CD8-positive, alpha-beta T cell (primary cell): ENCODE measurements at regions of chr5 and their contacts with region 1.

Region 1: GRCh38 chr5:132490486-132491367 is at the start of gene IRF1:
- DNase-seq: peak; percentile 94 to 99 (median 97)
- ATAC-seq: peak; percentile 74
- H3K4me3 ChIP-seq: peak within 1 kb of the TSS; percentile 90 to 96
- H3K4me3 Mint-ChIP-seq: peak within 1 kb of the TSS; percentile 96
- H3K27ac ChIP-seq: peak within 1 kb of the TSS; percentile 95 to 98
- H3K27ac Mint-ChIP-seq: peak within 1 kb of the TSS; percentile 97
- H3K4me1 ChIP-seq: peaks cover 75% of the 10 kb centered on the region
- H3K4me1 Mint-ChIP-seq: peaks cover 75% of the 10 kb centered on the region
- H3K27me3 ChIP-seq: no peaks in the 10 kb centered on the region
- H3K27me3 Mint-ChIP-seq: no peaks in the 10 kb centered on the region
- CTCF ChIP-seq: no peak
- total RNA-seq, gene IRF1: 1,214 to 1,250 TPM

Region 2: GRCh38 chr5:131634996-131635754 is 855.6 kb before region 1 on chr5 and contains the start of gene RAPGEF6:
- CTCF ChIA-PET with region 1: no interaction called
- POLR2A ChIA-PET with region 1: no interaction called
- intact Hi-C with region 1: loop called in 1 of 2 experiments (anchors 10 kb)
- DNase-seq: peak; percentile 91 to 100 (median 95)
- ATAC-seq: peak; percentile 83
- H3K4me3 ChIP-seq: peak within 1 kb of the TSS; percentile 83
- H3K4me3 Mint-ChIP-seq: peak within 1 kb of the TSS; percentile 96
- H3K27ac ChIP-seq: peak within 1 kb of the TSS; percentile 94 to 98
- H3K27ac Mint-ChIP-seq: peak within 1 kb of the TSS; percentile 99
- H3K4me1 ChIP-seq: peaks cover 61% of the 10 kb centered on the region
- H3K4me1 Mint-ChIP-seq: peaks cover 34% of the 10 kb centered on the region
- H3K27me3 ChIP-seq: no peaks in the 10 kb centered on the region
- H3K27me3 Mint-ChIP-seq: no peaks in the 10 kb centered on the region
- CTCF ChIP-seq: no peak
- total RNA-seq, gene RAPGEF6: 64.3 to 71.7 TPM

Region 3: DNA sequence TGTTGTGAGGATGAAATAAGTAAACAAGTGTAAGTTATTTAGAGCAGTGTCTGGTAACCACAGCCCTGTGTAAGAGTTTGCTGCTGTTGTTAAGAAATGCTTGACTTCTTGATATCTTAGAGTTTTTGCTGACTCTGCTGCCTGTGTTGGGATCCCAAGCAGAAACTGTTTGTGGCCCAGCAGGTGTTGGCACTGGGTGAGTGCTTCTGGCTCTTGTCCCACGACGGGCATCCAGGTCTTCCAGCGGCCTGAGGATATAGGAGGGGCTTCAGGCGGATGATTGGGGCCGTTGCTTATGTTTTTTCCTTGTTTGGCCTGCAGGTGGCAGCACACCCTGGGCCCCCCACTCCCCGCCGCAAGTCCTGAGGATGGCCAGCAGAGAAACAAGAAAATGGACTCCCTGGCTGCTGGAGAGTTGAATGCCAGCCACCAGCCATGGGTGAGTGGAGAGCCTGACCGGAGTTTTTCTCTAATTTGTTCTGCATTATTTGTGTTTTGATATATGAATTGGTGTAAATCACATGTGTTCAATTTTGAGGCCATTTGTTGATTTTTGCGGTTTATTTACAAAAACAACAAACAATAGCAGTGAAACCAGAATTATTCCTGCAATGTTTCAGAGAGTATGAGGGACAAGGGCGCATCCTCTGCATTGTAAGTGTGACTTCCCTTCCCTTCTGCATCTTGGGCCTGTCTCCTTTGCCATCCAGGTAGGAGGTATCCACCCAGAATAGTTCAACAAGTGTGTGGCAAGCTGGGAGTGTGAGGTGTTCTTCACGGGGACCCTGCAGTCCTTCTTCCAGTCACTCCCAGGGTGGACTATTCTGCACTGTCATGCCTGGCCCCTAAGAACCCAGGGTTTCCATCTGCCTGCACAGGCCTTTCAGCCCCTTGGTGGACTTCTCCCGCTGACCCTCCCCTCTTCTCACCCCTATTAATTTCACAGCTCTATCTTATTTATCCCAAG is 70.9 kb before region 1 on chr5:
- CTCF ChIA-PET with region 1: interaction called, 73 read pairs
- POLR2A ChIA-PET with region 1: interaction called, 136 read pairs
- intact Hi-C with region 1: loop called in 1 of 2 experiments (anchors 1 kb)
- DNase-seq: peak; percentile 27 to 84 (median 64)
- ATAC-seq: peak; percentile 71
- H3K4me3 ChIP-seq: peak overlapping the region; percentile 6 to 9
- H3K4me3 Mint-ChIP-seq: peak overlapping the region; percentile 80
- H3K27ac ChIP-seq: peak overlapping the region; percentile 38 to 98
- H3K27ac Mint-ChIP-seq: peak overlapping the region; percentile 94
- H3K4me1 ChIP-seq: peaks cover 82% of the 10 kb centered on the region
- H3K4me1 Mint-ChIP-seq: peaks cover 92% of the 10 kb centered on the region
- H3K27me3 ChIP-seq: no peaks in the 10 kb centered on the region
- H3K27me3 Mint-ChIP-seq: no peaks in the 10 kb centered on the region
- CTCF ChIP-seq: peak; percentile 89

Region 4: GRCh38 chr5:132437604-132438266 is 53.0 kb before region 1 on chr5:
- CTCF ChIA-PET with region 1: interaction called, 11 read pairs
- POLR2A ChIA-PET with region 1: interaction called, 28 read pairs
- intact Hi-C with region 1: no loop called
- DNase-seq: peak in 8 of 9 experiments; percentile 43 to 85 (median 67)
- ATAC-seq: peak; percentile 92
- H3K4me3 ChIP-seq: no peak overlapping the region
- H3K4me3 Mint-ChIP-seq: peak overlapping the region; percentile 63
- H3K27ac ChIP-seq: peak overlapping the region; percentile 31 to 77
- H3K27ac Mint-ChIP-seq: peak overlapping the region; percentile 87
- H3K4me1 ChIP-seq: peaks cover 88% of the 10 kb centered on the region
- H3K4me1 Mint-ChIP-seq: peaks cover 90% of the 10 kb centered on the region
- H3K27me3 ChIP-seq: no peaks in the 10 kb centered on the region
- H3K27me3 Mint-ChIP-seq: no peaks in the 10 kb centered on the region
- CTCF ChIP-seq: no peak

Region 5: GRCh38 chr5:132456296-132457001 is 34.3 kb before region 1 on chr5:
- CTCF ChIA-PET with region 1: interaction called, 48 read pairs
- POLR2A ChIA-PET with region 1: interaction called, 173 read pairs
- intact Hi-C with region 1: loop called (anchors 1 to 5 kb)
- DNase-seq: peak in 8 of 9 experiments; percentile 53 to 90 (median 77)
- ATAC-seq: peak; percentile 55
- H3K4me3 ChIP-seq: peak overlapping the region; percentile 21 to 30
- H3K4me3 Mint-ChIP-seq: peak overlapping the region; percentile 65
- H3K27ac ChIP-seq: peak overlapping the region; percentile 89 to 91
- H3K27ac Mint-ChIP-seq: peak overlapping the region; percentile 99
- H3K4me1 ChIP-seq: peaks cover 90% of the 10 kb centered on the region
- H3K4me1 Mint-ChIP-seq: peaks cover 92% of the 10 kb centered on the region
- H3K27me3 ChIP-seq: no peaks in the 10 kb centered on the region
- H3K27me3 Mint-ChIP-seq: no peaks in the 10 kb centered on the region
- CTCF ChIP-seq: no peak

Region 6: DNA sequence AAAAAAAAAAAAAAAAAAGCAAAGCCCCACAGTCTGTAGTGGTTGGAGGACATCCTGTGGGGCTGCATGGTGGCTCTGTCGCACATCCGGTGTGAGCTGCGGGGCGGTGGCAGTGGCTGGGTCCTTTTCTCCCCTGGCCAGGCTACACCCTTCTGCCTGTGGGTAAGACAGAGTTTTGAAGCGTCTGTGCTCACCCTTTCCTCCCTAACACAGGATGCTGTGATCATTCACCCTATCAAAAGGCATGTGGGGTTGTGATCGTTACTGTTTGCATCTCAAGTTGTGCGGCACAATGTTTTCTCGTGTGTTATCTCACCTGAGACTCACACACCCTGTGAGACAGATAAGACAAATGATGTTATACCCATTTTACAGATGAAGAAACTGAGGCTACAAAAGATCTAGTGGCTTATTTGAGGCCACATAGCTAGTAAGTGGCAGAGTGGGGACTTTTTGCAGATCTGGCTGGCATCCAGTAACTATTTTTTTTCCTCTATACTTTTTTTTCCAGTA is 17.7 kb before region 1 on chr5:
- CTCF ChIA-PET with region 1: interaction called, 65 read pairs
- POLR2A ChIA-PET with region 1: interaction called, 391 read pairs
- intact Hi-C with region 1: loop called in 1 of 2 experiments (anchors 1 kb)
- DNase-seq: peak; percentile 70 to 97 (median 85)
- ATAC-seq: peak; percentile 73
- H3K4me3 ChIP-seq: no peak overlapping the region
- H3K4me3 Mint-ChIP-seq: peak overlapping the region; percentile 5
- H3K27ac ChIP-seq: peak overlapping the region; percentile 52 to 93
- H3K27ac Mint-ChIP-seq: peak overlapping the region; percentile 87
- H3K4me1 ChIP-seq: peaks cover 82% of the 10 kb centered on the region
- H3K4me1 Mint-ChIP-seq: peaks cover 92% of the 10 kb centered on the region
- H3K27me3 ChIP-seq: no peaks in the 10 kb centered on the region
- H3K27me3 Mint-ChIP-seq: no peaks in the 10 kb centered on the region
- CTCF ChIP-seq: no peak

Region 7: GRCh38 chr5:132500931-132501630 is 10.4 kb after region 1 on chr5:
- CTCF ChIA-PET with region 1: interaction called, 23 read pairs
- POLR2A ChIA-PET with region 1: interaction called, 47 read pairs
- intact Hi-C with region 1: no loop called
- DNase-seq: peak; percentile 49 to 89 (median 79)
- ATAC-seq: peak; percentile 26
- H3K4me3 ChIP-seq: no peak overlapping the region
- H3K4me3 Mint-ChIP-seq: no peak overlapping the region
- H3K27ac ChIP-seq: peak overlapping the region in 1 of 2 experiments; percentile 86
- H3K27ac Mint-ChIP-seq: no peak overlapping the region
- H3K4me1 ChIP-seq: peaks cover 32% of the 10 kb centered on the region
- H3K4me1 Mint-ChIP-seq: peaks cover 36% of the 10 kb centered on the region
- H3K27me3 ChIP-seq: no peaks in the 10 kb centered on the region
- H3K27me3 Mint-ChIP-seq: peaks cover 3% of the 10 kb centered on the region
- CTCF ChIP-seq: peak; percentile 76